Activated CD8-positive, alpha-beta T cell treated with anti-CD3 and anti-CD28 coated beads, Interleukin-2, amount 10 ng/mL, durations not matched to agents 7 days and 5 days (primary cell): ENCODE measurements at regions of chr19 and their contacts with region 1.

Region 1: GRCh38 chr19:42440357-42441048 is 2.2 kb downstream of the CXCL17 start:
- DNase-seq: peak; percentile 87
- ATAC-seq: peak; percentile 71
- H3K4me3 Mint-ChIP-seq: no peak overlapping the region
- H3K27ac Mint-ChIP-seq: peak overlapping the region; percentile 23
- H3K4me1 Mint-ChIP-seq: peaks cover 25% of the 10 kb centered on the region
- H3K27me3 Mint-ChIP-seq: peaks cover 3% of the 10 kb centered on the region

Region 2: GRCh38 chr19:42360787-42361544 is 79.5 kb before region 1 on chr19:
- CTCF ChIA-PET with region 1: no interaction called
- POLR2A ChIA-PET with region 1: no interaction called
- DNase-seq: no peak
- ATAC-seq: no peak
- H3K4me3 Mint-ChIP-seq: no peak overlapping the region
- H3K27ac Mint-ChIP-seq: no peak overlapping the region
- H3K4me1 Mint-ChIP-seq: peaks cover 7% of the 10 kb centered on the region
- H3K27me3 Mint-ChIP-seq: no peaks in the 10 kb centered on the region

Region 3: GRCh38 chr19:42401365-42402303 is 38.9 kb before region 1 on chr19:
- CTCF ChIA-PET with region 1: interaction called, 14 read pairs
- POLR2A ChIA-PET with region 1: no interaction called
- DNase-seq: peak; percentile 78
- ATAC-seq: peak; percentile 54
- H3K4me3 Mint-ChIP-seq: peak overlapping the region; percentile 69
- H3K27ac Mint-ChIP-seq: peak overlapping the region; percentile 63
- H3K4me1 Mint-ChIP-seq: peaks cover 33% of the 10 kb centered on the region
- H3K27me3 Mint-ChIP-seq: no peaks in the 10 kb centered on the region

Region 4: GRCh38 chr19:42455621-42456081 is 15.1 kb after region 1 on chr19:
- CTCF ChIA-PET with region 1: interaction called, 96 read pairs
- POLR2A ChIA-PET with region 1: interaction called, 4 read pairs
- DNase-seq: no peak
- ATAC-seq: no peak
- H3K4me3 Mint-ChIP-seq: no peak overlapping the region
- H3K27ac Mint-ChIP-seq: no peak overlapping the region
- H3K4me1 Mint-ChIP-seq: peaks cover 55% of the 10 kb centered on the region
- H3K27me3 Mint-ChIP-seq: no peaks in the 10 kb centered on the region

Region 5: DNA sequence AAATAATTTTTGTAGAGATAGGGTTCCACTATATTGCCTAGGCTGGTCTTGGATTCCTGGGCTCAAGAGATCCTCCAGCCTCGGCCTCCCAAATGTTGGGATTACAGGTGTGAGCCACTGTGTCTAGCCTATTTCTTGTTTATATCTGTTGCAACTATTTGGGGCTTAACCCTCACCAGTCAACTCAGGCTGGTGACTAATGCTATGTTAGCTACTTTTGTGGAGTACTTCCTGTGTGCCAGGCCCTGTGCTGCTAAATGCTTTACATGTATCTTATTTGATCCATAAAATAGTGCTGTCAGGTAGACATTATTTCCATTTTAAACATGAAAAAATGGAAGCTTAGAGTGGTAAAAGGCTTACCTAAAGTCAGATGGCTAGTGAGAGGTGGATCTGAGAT is 73.9 kb after region 1 on chr19:
- CTCF ChIA-PET with region 1: interaction called, 15 read pairs
- POLR2A ChIA-PET with region 1: no interaction called
- DNase-seq: no peak
- ATAC-seq: no peak
- H3K4me3 Mint-ChIP-seq: no peak overlapping the region
- H3K27ac Mint-ChIP-seq: no peak overlapping the region
- H3K4me1 Mint-ChIP-seq: peaks cover 41% of the 10 kb centered on the region
- H3K27me3 Mint-ChIP-seq: no peaks in the 10 kb centered on the region

Region 6: DNA sequence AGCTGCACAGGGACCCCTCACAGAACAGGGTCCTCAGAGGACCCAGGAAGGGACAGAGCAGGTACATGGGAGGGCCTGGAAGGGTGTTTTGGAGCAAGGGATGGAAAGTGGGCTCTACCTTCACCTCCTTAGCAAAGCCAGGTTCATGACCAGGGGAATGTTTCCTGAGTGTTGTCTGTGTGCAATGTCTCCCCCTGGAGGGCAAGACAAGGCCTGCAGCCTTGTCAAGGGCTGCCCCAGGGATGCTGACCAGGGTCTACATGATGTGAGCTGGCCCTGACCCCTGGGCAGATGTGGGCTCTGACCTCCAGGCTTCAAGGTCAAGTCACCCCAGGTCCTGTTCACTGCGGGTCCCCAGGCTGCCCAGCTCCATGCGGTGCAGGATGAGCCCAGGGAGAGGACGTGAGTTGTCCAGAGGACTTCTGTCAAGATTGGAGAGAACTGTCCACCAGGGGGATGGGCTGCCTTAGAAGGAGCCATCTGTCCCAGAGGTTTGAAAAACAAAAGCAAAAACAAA is 88.8 kb after region 1 on chr19:
- CTCF ChIA-PET with region 1: interaction called, 54 read pairs
- POLR2A ChIA-PET with region 1: interaction called, 3 read pairs
- DNase-seq: peak; percentile 80
- ATAC-seq: peak; percentile 75
- H3K4me3 Mint-ChIP-seq: peak overlapping the region; percentile 77
- H3K27ac Mint-ChIP-seq: peak overlapping the region; percentile 90
- H3K4me1 Mint-ChIP-seq: peaks cover 49% of the 10 kb centered on the region
- H3K27me3 Mint-ChIP-seq: no peaks in the 10 kb centered on the region

Region 7: DNA sequence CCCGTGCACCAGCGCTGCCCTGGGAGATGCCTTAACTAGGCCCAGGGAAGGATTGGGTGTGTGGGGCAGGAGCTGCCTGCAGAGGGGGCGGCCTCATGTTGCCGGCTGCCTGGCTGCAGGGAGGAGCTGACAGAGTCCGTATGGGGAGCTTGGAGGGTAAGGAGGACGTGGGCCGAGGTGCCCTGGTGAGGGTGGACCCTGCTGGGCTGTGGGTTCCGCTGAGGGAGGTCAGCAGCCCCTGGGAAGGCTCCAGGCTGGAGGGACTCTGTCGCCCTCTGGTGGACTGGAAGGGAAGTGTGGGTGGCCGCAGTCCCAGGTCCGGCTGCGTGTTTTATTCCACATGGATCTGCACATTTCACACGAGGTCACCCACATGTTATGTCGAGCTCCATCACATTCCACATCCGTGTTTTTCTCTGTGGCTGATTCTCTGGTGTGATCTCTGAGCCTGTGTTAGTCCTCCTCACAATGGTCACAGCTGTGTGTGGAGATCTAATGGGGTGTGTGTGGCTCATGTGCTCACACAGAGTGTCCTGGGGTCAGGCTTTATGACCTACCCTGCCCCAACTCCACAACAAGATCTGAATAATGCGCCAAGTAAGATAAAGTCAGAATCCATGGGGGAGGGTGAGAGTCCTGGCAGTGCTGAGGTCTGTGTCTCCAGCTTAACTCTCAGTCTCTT is 156.0 kb after region 1 on chr19:
- CTCF ChIA-PET with region 1: interaction called, 12 read pairs
- POLR2A ChIA-PET with region 1: no interaction called
- DNase-seq: peak; percentile 40
- ATAC-seq: no peak
- H3K4me3 Mint-ChIP-seq: no peak overlapping the region
- H3K27ac Mint-ChIP-seq: no peak overlapping the region
- H3K4me1 Mint-ChIP-seq: no peaks in the 10 kb centered on the region
- H3K27me3 Mint-ChIP-seq: peaks cover 14% of the 10 kb centered on the region